Esophagus muscularis mucosa (tissue), 4 donors: ENCODE measurements at regions of chr22 and their contacts with region 1.

Region 1: DNA sequence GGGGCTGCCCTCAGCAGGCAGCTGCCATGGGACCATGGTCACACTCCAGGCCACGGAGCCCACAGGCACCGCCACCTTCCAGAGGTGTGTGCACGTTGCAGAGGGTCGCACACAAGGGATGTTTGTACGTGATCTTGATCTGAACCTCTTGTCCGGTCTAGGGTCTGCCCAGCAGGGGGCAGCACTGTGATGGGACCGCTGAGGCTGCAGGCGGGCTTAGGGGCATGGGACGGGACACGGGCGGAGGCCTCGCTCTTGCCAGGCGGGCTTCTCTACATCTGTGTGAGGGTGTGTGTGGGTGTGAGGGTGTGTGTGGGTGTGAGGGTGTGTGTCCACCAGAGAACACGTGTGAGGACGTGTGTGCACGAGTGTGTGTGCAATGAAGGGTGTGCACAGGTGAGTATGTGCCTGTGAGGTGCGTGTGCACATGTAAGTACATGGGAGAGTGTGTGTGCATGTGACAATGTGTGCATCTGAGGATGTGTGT is 52.4 kb downstream of the CACNA1I start:
- DNase-seq: no peak
- H3K4me3 ChIP-seq: no peak overlapping the region
- H3K27ac ChIP-seq: no peak overlapping the region
- H3K4me1 ChIP-seq: peaks cover 0 to 3% (median 0%) of the 10 kb centered on the region in 4 donors
- H3K27me3 ChIP-seq: peaks cover 0 to 99% (median 24%) of the 10 kb centered on the region in 4 donors
- CTCF ChIP-seq: peak in 2 of 3 experiments; percentile 40 to 49
- EP300 ChIP-seq: no peak
- POLR2A ChIP-seq: no peak

Region 2: GRCh38 chr22:39690881-39691605 is 68.1 kb after region 1 on chr22:
- intact Hi-C with region 1: no loop called
- DNase-seq: no peak
- H3K4me3 ChIP-seq: no peak overlapping the region
- H3K27ac ChIP-seq: no peak overlapping the region
- H3K4me1 ChIP-seq: peaks cover 0 to 9% (median 4%) of the 10 kb centered on the region in 4 donors
- H3K27me3 ChIP-seq: peaks cover 0 to 100% (median 10%) of the 10 kb centered on the region in 4 donors
- CTCF ChIP-seq: no peak
- EP300 ChIP-seq: no peak
- POLR2A ChIP-seq: no peak

Region 3: DNA sequence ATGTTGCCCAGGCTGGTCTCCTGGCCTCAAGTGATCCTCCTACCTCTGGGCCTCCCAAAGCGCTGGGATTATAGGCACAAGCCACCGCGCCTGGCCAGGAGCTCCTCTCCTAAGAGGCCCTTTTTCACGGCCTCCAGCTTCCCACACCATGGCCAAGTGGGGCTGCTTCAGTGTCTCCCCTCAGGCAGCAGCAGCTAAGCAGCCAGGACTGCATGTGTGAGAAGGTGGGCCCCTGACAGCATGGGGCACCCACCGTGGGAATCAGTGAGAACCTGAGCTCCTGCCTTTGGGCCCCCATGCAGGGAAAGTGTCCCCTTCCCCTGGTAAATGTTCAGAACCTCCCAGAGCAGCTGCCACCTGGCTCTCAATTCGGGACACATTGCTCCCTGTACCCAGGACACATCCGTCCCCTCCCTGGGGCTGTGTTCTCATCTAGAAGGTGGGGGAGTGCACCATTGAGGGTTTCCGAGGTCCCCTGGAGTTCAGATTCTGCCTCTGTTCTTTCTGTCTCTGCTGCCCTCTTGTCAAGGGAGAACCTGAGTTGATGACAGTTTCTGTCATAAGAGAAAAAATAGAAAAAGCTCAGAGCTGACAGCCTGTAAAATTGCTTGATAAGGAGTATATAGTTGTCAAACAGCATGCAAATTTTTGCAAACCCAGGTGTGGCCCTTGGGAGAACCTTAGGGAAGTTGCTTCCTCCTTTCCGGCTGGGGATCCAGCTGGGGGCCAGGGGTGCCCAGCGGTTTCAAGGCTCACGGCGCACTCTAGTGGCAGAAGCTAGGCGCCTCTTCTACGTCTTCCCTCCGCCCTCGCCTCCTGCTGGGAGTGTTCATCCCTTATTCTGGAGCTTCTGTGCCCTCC is 401.5 kb after region 1 on chr22:
- intact Hi-C with region 1: loop called (anchors 10 kb)
- DNase-seq: no peak
- H3K4me3 ChIP-seq: no peak overlapping the region
- H3K27ac ChIP-seq: no peak overlapping the region
- H3K4me1 ChIP-seq: peaks cover 4 to 11% (median 10%) of the 10 kb centered on the region in 4 donors
- H3K27me3 ChIP-seq: peaks cover 0 to 26% (median 0%) of the 10 kb centered on the region in 4 donors
- CTCF ChIP-seq: peak; percentile 75 to 88 (median 84)
- EP300 ChIP-seq: no peak
- POLR2A ChIP-seq: no peak